ENCODE measurements at regions of chr7 and their contacts with region 1.

Region 1: GRCh38 chr7:149028346-149029109 is at the start of gene PDIA4:
- DNase-seq: peak; percentile 97 to 100 (median 99)
- ATAC-seq: peak; percentile 92
- H3K4me3 ChIP-seq: peak within 1 kb of the TSS; percentile 65
- H3K4me3 Mint-ChIP-seq: peak within 1 kb of the TSS; percentile 82 to 95 (median 92)
- H3K27ac ChIP-seq: peak within 1 kb of the TSS; percentile 89
- H3K27ac Mint-ChIP-seq: peak within 1 kb of the TSS; percentile 89 to 96 (median 93)
- H3K4me1 ChIP-seq: peaks cover 16 to 17% of the 10 kb centered on the region in 2 donors
- H3K4me1 Mint-ChIP-seq: peaks cover 27 to 48% (median 41%) of the 10 kb centered on the region in 7 donors
- H3K27me3 ChIP-seq: no peaks in the 10 kb centered on the region
- H3K27me3 Mint-ChIP-seq: peaks cover 0 to 4% (median 0%) of the 10 kb centered on the region in 5 donors
- total RNA-seq, gene PDIA4: 38.2 to 157 (median 73.7) TPM

Region 2: GRCh38 chr7:148556924-148557323 is 471.6 kb before region 1 on chr7:
- CTCF ChIA-PET with region 1: no interaction called
- POLR2A ChIA-PET with region 1: no interaction called
- intact Hi-C with region 1: no loop called
- DNase-seq: no peak
- ATAC-seq: no peak
- H3K4me3 ChIP-seq: no peak overlapping the region
- H3K4me3 Mint-ChIP-seq: no peak overlapping the region
- H3K27ac ChIP-seq: no peak overlapping the region
- H3K27ac Mint-ChIP-seq: no peak overlapping the region
- H3K4me1 ChIP-seq: no peaks in the 10 kb centered on the region
- H3K4me1 Mint-ChIP-seq: peaks cover 0 to 20% (median 5%) of the 10 kb centered on the region in 7 donors
- H3K27me3 ChIP-seq: no peaks in the 10 kb centered on the region
- H3K27me3 Mint-ChIP-seq: peaks cover 0 to 32% (median 26%) of the 10 kb centered on the region in 5 donors

Region 3: DNA sequence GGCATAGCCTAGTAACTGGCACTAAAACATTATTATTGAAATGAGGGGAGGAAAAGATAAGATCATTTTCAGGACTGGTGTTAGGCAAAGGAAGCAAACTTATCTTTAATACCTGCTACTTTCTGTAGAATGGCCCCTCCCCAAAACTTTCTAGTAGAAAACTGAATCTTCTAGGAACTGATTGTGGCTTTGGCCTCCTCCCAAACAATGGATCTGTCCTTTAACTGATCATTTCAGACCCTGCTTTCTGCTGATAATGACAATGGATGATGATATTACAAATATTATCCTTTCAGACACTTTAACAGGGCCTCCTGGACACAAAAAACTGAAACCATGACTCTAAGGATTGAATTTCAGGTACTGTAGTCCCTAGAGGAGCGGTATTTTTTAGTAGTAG is 199.6 kb before region 1 on chr7:
- CTCF ChIA-PET with region 1: no interaction called
- POLR2A ChIA-PET with region 1: no interaction called
- intact Hi-C with region 1: no loop called
- DNase-seq: no peak
- ATAC-seq: no peak
- H3K4me3 ChIP-seq: no peak overlapping the region
- H3K4me3 Mint-ChIP-seq: no peak overlapping the region
- H3K27ac ChIP-seq: no peak overlapping the region
- H3K27ac Mint-ChIP-seq: peak overlapping the region in 1 of 9 donors; percentile 30
- H3K4me1 ChIP-seq: no peaks in the 10 kb centered on the region
- H3K4me1 Mint-ChIP-seq: peaks cover 0 to 16% (median 0%) of the 10 kb centered on the region in 7 donors
- H3K27me3 ChIP-seq: no peaks in the 10 kb centered on the region
- H3K27me3 Mint-ChIP-seq: no peaks in the 10 kb centered on the region

Region 4: DNA sequence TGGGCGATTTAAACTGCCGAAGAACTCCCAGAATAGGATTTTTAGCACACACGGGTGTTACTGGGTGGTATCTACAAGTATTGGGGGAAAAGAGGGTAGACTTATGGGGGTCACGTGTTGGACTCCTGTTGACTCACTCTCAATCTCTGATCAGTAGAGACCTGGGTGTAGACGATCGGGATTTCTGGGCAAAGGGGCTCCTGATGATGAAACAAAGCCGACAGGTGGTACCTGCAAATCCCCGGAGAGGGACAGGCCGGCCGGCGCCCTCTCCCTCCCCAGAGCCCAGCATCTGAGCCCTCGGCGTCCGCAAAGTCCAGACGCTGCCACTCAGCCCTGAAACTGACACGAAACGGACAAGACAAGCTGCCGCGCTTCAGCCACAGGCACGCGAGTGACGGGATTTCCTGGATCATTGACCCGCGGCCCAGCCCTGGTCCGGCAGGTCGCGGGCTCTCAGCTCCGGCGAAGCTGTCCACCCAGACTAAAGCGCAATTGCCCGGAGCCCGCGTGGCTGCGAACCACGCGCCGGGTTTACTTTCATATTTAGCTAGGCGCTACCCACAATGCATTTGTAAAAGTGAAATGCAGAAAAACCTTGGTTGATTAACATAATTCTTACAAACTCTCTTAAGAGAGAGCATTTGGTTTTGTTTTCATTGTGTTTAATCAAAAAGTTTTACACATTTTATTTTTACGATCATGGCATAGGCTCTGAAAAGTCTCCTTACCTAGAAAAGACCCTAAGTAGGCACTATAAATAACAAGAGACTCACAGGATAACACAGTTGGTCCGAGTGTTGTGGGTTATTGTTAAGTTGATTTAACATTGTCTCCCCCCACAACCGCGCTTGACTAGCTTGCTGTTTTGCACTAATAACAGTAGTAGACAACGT is 87.6 kb before region 1 on chr7:
- CTCF ChIA-PET with region 1: no interaction called
- POLR2A ChIA-PET with region 1: no interaction called
- intact Hi-C with region 1: loop called (anchors 1 kb)
- DNase-seq: peak; percentile 45 to 86 (median 76)
- ATAC-seq: peak; percentile 88
- H3K4me3 ChIP-seq: peak overlapping the region; percentile 95
- H3K4me3 Mint-ChIP-seq: peak overlapping the region; percentile 86 to 99 (median 96)
- H3K27ac ChIP-seq: peak overlapping the region; percentile 88
- H3K27ac Mint-ChIP-seq: peak overlapping the region; percentile 94 to 99 (median 98)
- H3K4me1 ChIP-seq: peaks cover 7 to 12% of the 10 kb centered on the region in 2 donors
- H3K4me1 Mint-ChIP-seq: peaks cover 8 to 25% (median 20%) of the 10 kb centered on the region in 7 donors
- H3K27me3 ChIP-seq: no peaks in the 10 kb centered on the region
- H3K27me3 Mint-ChIP-seq: no peaks in the 10 kb centered on the region

Region 5: DNA sequence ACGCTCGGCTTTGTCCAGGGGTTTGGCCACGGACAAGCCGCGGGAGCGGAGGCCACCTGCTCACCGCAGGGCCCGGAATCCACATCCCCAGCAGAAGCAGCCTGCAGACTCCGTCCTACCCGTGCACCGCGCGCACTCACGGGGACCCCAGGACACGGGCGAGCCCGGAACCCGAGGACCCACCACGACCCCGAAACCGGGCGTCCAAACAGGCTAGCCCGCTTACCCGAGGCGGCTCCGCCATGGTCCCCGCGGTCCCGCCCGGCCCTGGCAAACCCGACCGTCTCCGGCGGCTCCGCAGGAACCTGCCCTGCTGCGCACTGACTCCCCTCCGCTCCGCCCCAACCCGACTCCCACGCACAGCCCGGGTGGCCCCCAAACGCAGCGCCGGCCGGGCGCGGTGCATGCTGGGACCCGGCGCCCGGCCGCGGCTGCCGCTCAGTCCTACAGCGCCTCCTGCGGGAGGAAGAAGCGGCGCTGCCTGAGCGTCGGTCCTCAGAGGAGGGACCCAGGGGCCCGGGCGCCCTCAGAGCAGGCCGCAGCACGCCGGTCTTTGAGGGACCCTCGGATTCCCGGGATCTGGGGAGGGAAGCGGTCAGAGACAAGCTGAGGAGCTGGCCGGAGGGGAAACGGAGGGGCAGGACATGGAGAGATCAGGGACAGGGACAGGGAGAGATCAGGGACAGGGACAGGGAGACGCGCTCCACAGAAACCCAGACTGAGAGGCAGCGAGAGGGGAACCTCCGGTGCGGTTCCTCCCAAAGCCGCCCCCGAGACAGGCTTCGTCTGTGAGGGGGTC is 62.1 kb after region 1 on chr7 and contains the start of gene ZNF786:
- CTCF ChIA-PET with region 1: interaction called, 5 read pairs
- POLR2A ChIA-PET with region 1: interaction called, 6 read pairs
- intact Hi-C with region 1: loop called (anchors 1 kb)
- DNase-seq: peak; percentile 87 to 97 (median 92)
- ATAC-seq: peak; percentile 95
- H3K4me3 ChIP-seq: peak within 1 kb of the TSS; percentile 93
- H3K4me3 Mint-ChIP-seq: peak within 1 kb of the TSS; percentile 91 to 100 (median 99)
- H3K27ac ChIP-seq: peak within 1 kb of the TSS; percentile 85
- H3K27ac Mint-ChIP-seq: peak within 1 kb of the TSS; percentile 93 to 100 (median 99)
- H3K4me1 ChIP-seq: peaks cover 8 to 9% of the 10 kb centered on the region in 2 donors
- H3K4me1 Mint-ChIP-seq: peaks cover 18 to 40% (median 35%) of the 10 kb centered on the region in 7 donors
- H3K27me3 ChIP-seq: no peaks in the 10 kb centered on the region
- H3K27me3 Mint-ChIP-seq: no peaks in the 10 kb centered on the region
- total RNA-seq, gene ZNF786: 5.4 to 22.0 (median 10.0) TPM

Region 6: DNA sequence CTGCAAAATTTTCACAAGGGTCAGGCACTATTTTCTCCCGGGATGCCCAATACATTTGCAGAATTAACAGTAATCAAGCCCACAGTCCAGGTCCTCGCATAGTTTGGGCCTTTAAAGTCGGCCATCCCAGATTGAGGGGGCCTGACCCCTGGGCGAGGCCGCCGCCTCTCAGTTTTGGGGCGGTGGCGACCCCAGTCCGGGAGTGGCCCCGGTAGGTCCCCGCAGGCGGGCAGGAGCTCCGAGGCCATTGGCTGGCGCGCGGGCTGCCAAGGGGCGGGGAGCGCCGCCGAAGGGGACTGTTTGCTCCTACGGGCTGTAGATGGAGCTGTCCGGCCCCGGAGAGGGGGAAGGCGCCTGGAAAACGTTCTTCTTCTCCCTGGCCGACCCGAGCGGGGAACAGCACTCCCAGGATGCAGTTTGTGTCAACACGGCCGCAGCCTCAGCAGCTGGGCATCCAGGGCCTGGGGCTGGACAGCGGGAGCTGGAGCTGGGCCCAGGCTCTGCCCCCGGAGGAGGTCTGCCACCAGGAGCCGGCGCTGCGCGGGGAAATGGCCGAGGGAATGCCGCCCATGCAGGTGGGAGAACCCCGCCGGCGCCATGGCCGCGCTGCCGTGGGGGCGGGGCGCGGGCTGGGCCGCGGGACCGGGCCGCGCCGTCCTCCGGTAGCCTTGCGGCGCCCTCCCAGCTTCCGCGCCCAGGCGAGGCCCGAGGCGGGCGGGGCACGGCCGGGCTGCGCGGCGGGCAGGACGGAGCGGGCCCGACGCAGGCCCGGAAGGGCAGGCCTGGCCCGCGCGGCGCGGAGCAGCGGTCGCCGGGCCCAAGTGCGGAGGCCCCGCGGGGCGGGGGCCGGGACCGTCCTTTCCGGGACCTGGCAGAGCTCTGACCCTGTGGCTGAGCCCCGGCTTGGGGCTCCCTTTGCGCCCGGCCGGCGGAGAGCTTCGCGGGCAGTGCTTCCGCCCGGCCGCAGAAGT is 166.9 kb after region 1 on chr7 and contains the start of gene ZNF282:
- CTCF ChIA-PET with region 1: no interaction called
- POLR2A ChIA-PET with region 1: no interaction called
- intact Hi-C with region 1: loop called in 1 of 2 experiments (anchors 1 kb)
- DNase-seq: peak; percentile 43 to 84 (median 56)
- ATAC-seq: peak; percentile 91
- H3K4me3 ChIP-seq: peak within 1 kb of the TSS; percentile 82
- H3K4me3 Mint-ChIP-seq: peak within 1 kb of the TSS; percentile 83 to 94 (median 90)
- H3K27ac ChIP-seq: peak within 1 kb of the TSS; percentile 77
- H3K27ac Mint-ChIP-seq: peak within 1 kb of the TSS; percentile 79 to 97 (median 86)
- H3K4me1 ChIP-seq: peaks cover 6 to 8% of the 10 kb centered on the region in 2 donors
- H3K4me1 Mint-ChIP-seq: peaks cover 20 to 52% (median 47%) of the 10 kb centered on the region in 7 donors
- H3K27me3 ChIP-seq: no peaks in the 10 kb centered on the region
- H3K27me3 Mint-ChIP-seq: peaks cover 0 to 3% (median 0%) of the 10 kb centered on the region in 5 donors
- total RNA-seq, gene ZNF282: 12.1 to 36.7 (median 15.1) TPM

Region 7: DNA sequence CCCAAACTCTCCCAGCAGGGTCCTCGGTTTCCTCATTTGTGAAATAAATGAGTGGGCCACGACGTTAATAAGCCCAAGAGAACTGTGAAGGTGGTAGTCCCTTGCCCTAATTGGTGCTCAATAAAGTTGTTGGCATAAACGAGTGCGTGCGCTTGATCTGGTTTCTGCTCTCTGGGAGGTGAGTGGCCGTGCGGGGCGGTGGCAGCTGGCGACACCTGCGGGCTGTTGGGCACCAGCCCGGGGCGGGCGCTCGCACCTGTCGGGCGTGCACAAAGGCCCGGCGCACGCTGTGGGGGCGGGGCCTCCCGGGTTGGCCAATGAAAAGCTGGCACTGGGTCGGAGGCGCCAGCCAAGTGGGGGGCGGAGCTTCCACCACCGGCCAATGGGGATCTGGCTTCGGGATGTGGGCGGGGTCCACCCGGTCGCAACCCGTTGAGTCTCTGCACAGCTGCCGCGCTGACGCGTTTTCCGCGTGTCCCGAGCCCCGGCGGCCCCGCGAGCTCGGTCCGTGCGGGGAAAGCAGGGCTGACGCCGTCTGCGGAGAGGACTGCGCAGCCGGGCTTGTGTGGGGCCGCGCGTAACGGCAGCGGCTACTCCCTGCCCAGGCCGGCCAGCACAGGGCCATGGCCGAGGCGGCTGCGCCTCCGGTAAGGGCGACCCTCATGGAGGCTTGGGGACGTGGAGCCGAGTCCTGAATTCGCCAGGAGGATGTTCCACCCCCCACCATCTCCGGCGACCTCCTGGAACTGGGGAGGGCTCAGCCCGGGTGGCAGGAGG is 256.5 kb after region 1 on chr7:
- CTCF ChIA-PET with region 1: no interaction called
- POLR2A ChIA-PET with region 1: no interaction called
- intact Hi-C with region 1: loop called (anchors 1 to 2 kb)
- DNase-seq: peak; percentile 96 to 99 (median 98)
- ATAC-seq: peak; percentile 98
- H3K4me3 ChIP-seq: peak overlapping the region; percentile 80
- H3K4me3 Mint-ChIP-seq: peak overlapping the region; percentile 79 to 97 (median 92)
- H3K27ac ChIP-seq: peak overlapping the region; percentile 72
- H3K27ac Mint-ChIP-seq: peak overlapping the region; percentile 76 to 96 (median 93)
- H3K4me1 ChIP-seq: peaks cover 30 to 36% of the 10 kb centered on the region in 2 donors
- H3K4me1 Mint-ChIP-seq: peaks cover 26 to 55% (median 46%) of the 10 kb centered on the region in 7 donors
- H3K27me3 ChIP-seq: no peaks in the 10 kb centered on the region
- H3K27me3 Mint-ChIP-seq: no peaks in the 10 kb centered on the region

Region 8: GRCh38 chr7:149838224-149838947 is 809.9 kb after region 1 on chr7 and contains the start of gene ZNF862:
- CTCF ChIA-PET with region 1: no interaction called
- POLR2A ChIA-PET with region 1: no interaction called
- intact Hi-C with region 1: loop called in 1 of 2 experiments (anchors 1 kb)
- DNase-seq: peak; percentile 84 to 96 (median 94)
- ATAC-seq: peak; percentile 99
- H3K4me3 ChIP-seq: peak within 1 kb of the TSS; percentile 67
- H3K4me3 Mint-ChIP-seq: peak within 1 kb of the TSS; percentile 85 to 97 (median 91)
- H3K27ac ChIP-seq: peak within 1 kb of the TSS; percentile 79
- H3K27ac Mint-ChIP-seq: peak within 1 kb of the TSS; percentile 77 to 96 (median 88)
- H3K4me1 ChIP-seq: peaks cover 12 to 22% of the 10 kb centered on the region in 2 donors
- H3K4me1 Mint-ChIP-seq: peaks cover 25 to 52% (median 48%) of the 10 kb centered on the region in 7 donors
- H3K27me3 ChIP-seq: no peaks in the 10 kb centered on the region
- H3K27me3 Mint-ChIP-seq: peaks cover 0 to 15% (median 3%) of the 10 kb centered on the region in 5 donors
- total RNA-seq, gene ZNF862: 36.9 to 112 (median 41.8) TPM

Measured in naive thymus-derived CD4-positive, alpha-beta T cell (primary cell).